ENCODE measurements at regions of chr1 and their contacts with region 1.

Region 1: GRCh38 chr1:237232501-237232900 is 190.5 kb downstream of the RYR2 start:
- DNase-seq: no peak
- H3K4me3 ChIP-seq: no peak overlapping the region
- H3K27ac ChIP-seq: no peak overlapping the region
- H3K4me1 ChIP-seq: peaks cover 0 to 2% (median under 1%) of the 10 kb centered on the region in 4 experiments; a peak in 1 of 7 replicates
- H3K27me3 ChIP-seq: no peaks in the 10 kb centered on the region
- CTCF ChIP-seq: peak; percentile 9 to 54 (median 38)
- EP300 ChIP-seq: no peak
- POLR2A ChIP-seq: no peak
- RAD21 ChIP-seq: peak; percentile 7 to 43; a peak in 3 of 4 replicates

Region 2: GRCh38 chr1:237219751-237220642 is 12.5 kb before region 1 on chr1:
- CTCF ChIA-PET with region 1: interaction called, 14 read pairs
- POLR2A ChIA-PET with region 1: no interaction called
- DNase-seq: no peak
- H3K4me3 ChIP-seq: no peak overlapping the region
- H3K27ac ChIP-seq: no peak overlapping the region
- H3K4me1 ChIP-seq: no peaks in the 10 kb centered on the region
- H3K27me3 ChIP-seq: no peaks in the 10 kb centered on the region
- CTCF ChIP-seq: no peak
- EP300 ChIP-seq: no peak
- POLR2A ChIP-seq: no peak
- RAD21 ChIP-seq: no peak

Region 3: DNA sequence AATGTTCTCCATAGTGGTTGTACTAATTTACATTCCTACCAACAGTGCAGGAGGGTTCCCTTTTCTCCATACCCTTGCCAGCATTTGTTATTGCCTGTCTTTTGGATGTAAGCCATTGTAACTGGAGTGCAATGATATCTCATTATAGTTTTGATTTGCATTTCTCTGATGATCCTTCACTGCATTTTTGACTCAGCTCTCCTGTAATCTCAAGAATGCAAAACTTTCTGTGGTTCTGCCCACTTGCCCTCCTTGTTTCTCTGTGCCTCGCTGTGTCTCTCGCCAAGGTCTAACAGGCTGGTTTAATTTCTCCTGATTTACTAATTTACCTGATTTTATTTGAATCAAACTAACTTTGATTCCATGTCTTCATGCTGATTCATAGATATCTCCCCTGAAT is 250.3 kb after region 1 on chr1:
- CTCF ChIA-PET with region 1: no interaction called
- POLR2A ChIA-PET with region 1: no interaction called
- DNase-seq: no peak
- H3K4me3 ChIP-seq: no peak overlapping the region
- H3K27ac ChIP-seq: no peak overlapping the region
- H3K4me1 ChIP-seq: no peaks in the 10 kb centered on the region
- H3K27me3 ChIP-seq: no peaks in the 10 kb centered on the region
- CTCF ChIP-seq: no peak
- EP300 ChIP-seq: no peak
- POLR2A ChIP-seq: no peak
- RAD21 ChIP-seq: no peak

Measured in H1 (cell line).